ENCODE measurements at regions of chr6 and their contacts with region 1.

Region 1: GRCh38 chr6:73515204-73515655 is 5.6 kb downstream of the EEF1A1 start:
- DNase-seq: no peak
- H3K4me3 Mint-ChIP-seq: no peak overlapping the region
- H3K27ac Mint-ChIP-seq: peak overlapping the region; percentile 75
- H3K4me1 Mint-ChIP-seq: peaks cover 55% of the 10 kb centered on the region
- H3K27me3 Mint-ChIP-seq: no peaks in the 10 kb centered on the region

Region 2: GRCh38 chr6:73145690-73146089 is 369.5 kb before region 1 on chr6:
- CTCF ChIA-PET with region 1: no interaction called
- POLR2A ChIA-PET with region 1: no interaction called
- DNase-seq: no peak
- H3K4me3 Mint-ChIP-seq: no peak overlapping the region
- H3K27ac Mint-ChIP-seq: no peak overlapping the region
- H3K4me1 Mint-ChIP-seq: peaks cover 1% of the 10 kb centered on the region
- H3K27me3 Mint-ChIP-seq: no peaks in the 10 kb centered on the region

Region 3: GRCh38 chr6:73451223-73452107 is 63.8 kb before region 1 on chr6:
- CTCF ChIA-PET with region 1: interaction called, 4 read pairs
- POLR2A ChIA-PET with region 1: interaction called, 102 read pairs
- DNase-seq: peak; percentile 57
- H3K4me3 Mint-ChIP-seq: peak overlapping the region; percentile 95
- H3K27ac Mint-ChIP-seq: peak overlapping the region; percentile 86
- H3K4me1 Mint-ChIP-seq: peaks cover 50% of the 10 kb centered on the region
- H3K27me3 Mint-ChIP-seq: no peaks in the 10 kb centered on the region

Region 4: GRCh38 chr6:73471686-73472290 is 43.4 kb before region 1 on chr6:
- CTCF ChIA-PET with region 1: interaction called, 5 read pairs
- POLR2A ChIA-PET with region 1: interaction called, 22 read pairs
- DNase-seq: no peak
- H3K4me3 Mint-ChIP-seq: peak overlapping the region; percentile 73
- H3K27ac Mint-ChIP-seq: peak overlapping the region; percentile 88
- H3K4me1 Mint-ChIP-seq: peaks cover 30% of the 10 kb centered on the region
- H3K27me3 Mint-ChIP-seq: no peaks in the 10 kb centered on the region

Region 5: DNA sequence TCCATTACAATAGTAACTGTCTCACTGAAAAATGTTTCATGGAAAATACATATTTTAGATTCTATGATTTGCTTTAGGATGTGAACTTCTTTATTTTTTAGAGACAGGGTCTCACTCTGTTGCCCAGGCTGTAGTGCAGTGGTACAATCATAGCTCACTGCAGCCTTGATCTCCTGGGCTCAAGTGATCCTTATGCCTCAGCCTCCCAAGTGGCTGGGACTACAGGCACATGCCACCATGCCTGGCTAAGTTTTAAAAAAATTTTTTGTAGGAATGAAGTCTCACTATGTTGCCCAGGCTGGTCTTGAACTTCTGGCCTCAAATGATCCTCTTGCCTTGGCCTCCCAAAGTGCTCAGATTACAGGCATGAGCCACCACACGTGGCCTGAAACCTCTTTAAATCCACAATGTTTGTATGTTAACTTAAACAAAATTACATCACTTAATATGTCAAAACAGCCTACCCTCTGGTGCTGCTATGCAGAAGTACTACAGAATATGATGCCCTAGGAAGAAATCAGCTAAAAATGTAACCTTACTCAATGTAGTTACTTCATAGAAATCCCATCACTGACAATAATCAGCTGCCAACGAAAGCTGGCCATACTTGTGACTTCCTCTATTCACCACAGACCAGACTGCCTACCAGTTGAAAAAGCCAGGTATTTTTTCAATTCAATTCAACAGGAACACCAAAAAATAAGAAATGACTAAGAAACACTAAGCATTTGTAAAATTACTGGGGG is 12.0 kb before region 1 on chr6:
- CTCF ChIA-PET with region 1: interaction called, 8 read pairs
- POLR2A ChIA-PET with region 1: interaction called, 93 read pairs
- DNase-seq: no peak
- H3K4me3 Mint-ChIP-seq: no peak overlapping the region
- H3K27ac Mint-ChIP-seq: peak overlapping the region; percentile 36
- H3K4me1 Mint-ChIP-seq: peaks cover 5% of the 10 kb centered on the region
- H3K27me3 Mint-ChIP-seq: no peaks in the 10 kb centered on the region

Region 6: DNA sequence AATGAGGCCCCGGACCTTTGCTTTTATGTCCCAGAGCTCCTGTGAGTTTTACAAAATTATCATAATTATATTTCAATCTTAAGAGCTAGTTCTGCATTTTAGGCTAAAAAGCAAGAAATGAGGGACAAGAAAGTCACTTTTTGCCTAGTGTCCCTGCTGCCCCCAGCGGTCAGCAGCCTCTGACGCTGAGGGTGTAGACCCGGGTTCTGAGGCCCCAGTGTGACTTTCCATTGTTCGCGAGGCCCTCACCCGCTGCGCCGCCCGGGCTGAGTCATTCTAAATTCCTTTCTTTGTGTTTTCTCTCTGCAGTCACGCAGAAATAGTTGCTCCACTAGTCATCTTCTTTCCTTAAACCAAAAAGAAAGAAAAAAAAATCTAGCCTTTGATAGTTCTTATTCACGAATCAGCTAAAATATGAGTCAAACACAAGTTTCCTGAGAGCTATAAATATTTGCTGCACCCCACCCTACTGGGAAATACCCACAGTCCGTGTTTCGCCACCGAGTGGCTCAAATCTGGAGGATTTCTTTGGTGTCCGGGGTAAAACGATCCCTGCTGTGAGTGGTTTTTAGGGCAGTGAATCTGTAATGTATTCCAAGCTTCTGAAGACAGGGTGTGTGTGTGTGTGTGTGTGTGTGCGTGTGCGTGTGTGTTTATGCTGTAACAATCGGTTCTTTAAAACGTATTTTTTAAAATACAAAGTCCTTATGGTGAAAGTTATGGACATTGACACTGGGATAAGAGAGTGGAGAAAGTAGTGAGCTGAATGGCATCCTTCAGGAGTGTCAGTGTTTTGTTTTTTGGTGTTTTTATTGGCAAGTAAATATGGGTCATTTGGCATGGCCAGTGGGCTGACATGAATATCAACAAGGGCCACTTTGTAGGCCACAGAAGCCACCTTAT is 65.3 kb after region 1 on chr6:
- CTCF ChIA-PET with region 1: interaction called, 22 read pairs
- POLR2A ChIA-PET with region 1: interaction called, 143 read pairs
- DNase-seq: peak; percentile 70
- H3K4me3 Mint-ChIP-seq: peak overlapping the region; percentile 65
- H3K27ac Mint-ChIP-seq: peak overlapping the region; percentile 91
- H3K4me1 Mint-ChIP-seq: peaks cover 31% of the 10 kb centered on the region
- H3K27me3 Mint-ChIP-seq: no peaks in the 10 kb centered on the region

Region 7: GRCh38 chr6:73585566-73586415 is 70.6 kb after region 1 on chr6:
- CTCF ChIA-PET with region 1: interaction called, 22 read pairs
- POLR2A ChIA-PET with region 1: interaction called, 143 read pairs
- DNase-seq: peak; percentile 34
- H3K4me3 Mint-ChIP-seq: peak overlapping the region; percentile 70
- H3K27ac Mint-ChIP-seq: peak overlapping the region; percentile 93
- H3K4me1 Mint-ChIP-seq: peaks cover 27% of the 10 kb centered on the region
- H3K27me3 Mint-ChIP-seq: no peaks in the 10 kb centered on the region

Region 8: GRCh38 chr6:73610444-73611275 is 95.4 kb after region 1 on chr6:
- CTCF ChIA-PET with region 1: interaction called, 53 read pairs
- POLR2A ChIA-PET with region 1: interaction called, 191 read pairs
- DNase-seq: no peak
- H3K4me3 Mint-ChIP-seq: no peak overlapping the region
- H3K27ac Mint-ChIP-seq: no peak overlapping the region
- H3K4me1 Mint-ChIP-seq: peaks cover 2% of the 10 kb centered on the region
- H3K27me3 Mint-ChIP-seq: no peaks in the 10 kb centered on the region

Region 9: GRCh38 chr6:73832313-73832712 is 317.1 kb after region 1 on chr6:
- CTCF ChIA-PET with region 1: no interaction called
- POLR2A ChIA-PET with region 1: no interaction called
- DNase-seq: no peak
- H3K4me3 Mint-ChIP-seq: no peak overlapping the region
- H3K27ac Mint-ChIP-seq: no peak overlapping the region
- H3K4me1 Mint-ChIP-seq: no peaks in the 10 kb centered on the region
- H3K27me3 Mint-ChIP-seq: no peaks in the 10 kb centered on the region

Measured in activated CD4-positive, alpha-beta memory T cell treated with anti-CD3 and anti-CD28 coated beads, Interleukin-2, amount 10 ng/mL, durations not matched to agents 7 days and 5 days (primary cell).